Activated T-helper 2 cell treated with anti-CD3 and anti-CD28 coated beads, Interferon-gamma antibody, Interleukin-2, Interleukin-4, amounts not matched to agents 10 μg/mL and 5 μg/mL and 100 μg/mL, durations not matched to agents 14 hours and 24 hours and 36 hours (primary cell): ENCODE measurements at regions of chr6 and their contacts with region 1.

Region 1: DNA sequence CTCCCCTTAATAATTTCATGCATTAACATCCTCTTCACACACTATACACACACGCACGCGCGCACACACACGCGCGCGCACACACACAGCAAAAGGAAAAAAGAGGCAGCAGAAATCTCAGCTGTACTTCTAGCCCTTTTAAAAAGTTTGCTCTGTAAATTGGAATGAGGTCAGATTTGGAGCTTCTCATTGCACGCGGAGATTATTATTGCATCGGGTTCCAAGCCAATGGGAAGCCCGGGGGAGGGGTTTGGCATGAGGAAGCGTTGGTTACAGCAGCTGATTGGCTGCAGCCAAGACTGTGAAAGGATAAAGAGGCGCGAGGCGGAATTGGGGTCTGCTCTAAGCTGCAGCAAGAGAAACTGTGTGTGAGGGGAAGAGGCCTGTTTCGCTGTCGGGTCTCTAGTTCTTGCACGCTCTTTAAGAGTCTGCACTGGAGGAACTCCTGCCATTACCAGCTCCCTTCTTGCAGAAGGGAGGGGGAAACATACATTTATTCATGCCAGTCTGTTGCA is at the start of gene SOX4:
- DNase-seq: peak; percentile 77
- H3K4me3 Mint-ChIP-seq: no peak within 1 kb of the TSS
- H3K27ac Mint-ChIP-seq: peak within 1 kb of the TSS; percentile 91
- H3K4me1 Mint-ChIP-seq: peaks cover 22% of the 10 kb centered on the region
- H3K27me3 Mint-ChIP-seq: peaks cover 47% of the 10 kb centered on the region
- total RNA-seq, gene SOX4: 20.3 and 20.8 TPM in 2 replicates

Region 2: DNA sequence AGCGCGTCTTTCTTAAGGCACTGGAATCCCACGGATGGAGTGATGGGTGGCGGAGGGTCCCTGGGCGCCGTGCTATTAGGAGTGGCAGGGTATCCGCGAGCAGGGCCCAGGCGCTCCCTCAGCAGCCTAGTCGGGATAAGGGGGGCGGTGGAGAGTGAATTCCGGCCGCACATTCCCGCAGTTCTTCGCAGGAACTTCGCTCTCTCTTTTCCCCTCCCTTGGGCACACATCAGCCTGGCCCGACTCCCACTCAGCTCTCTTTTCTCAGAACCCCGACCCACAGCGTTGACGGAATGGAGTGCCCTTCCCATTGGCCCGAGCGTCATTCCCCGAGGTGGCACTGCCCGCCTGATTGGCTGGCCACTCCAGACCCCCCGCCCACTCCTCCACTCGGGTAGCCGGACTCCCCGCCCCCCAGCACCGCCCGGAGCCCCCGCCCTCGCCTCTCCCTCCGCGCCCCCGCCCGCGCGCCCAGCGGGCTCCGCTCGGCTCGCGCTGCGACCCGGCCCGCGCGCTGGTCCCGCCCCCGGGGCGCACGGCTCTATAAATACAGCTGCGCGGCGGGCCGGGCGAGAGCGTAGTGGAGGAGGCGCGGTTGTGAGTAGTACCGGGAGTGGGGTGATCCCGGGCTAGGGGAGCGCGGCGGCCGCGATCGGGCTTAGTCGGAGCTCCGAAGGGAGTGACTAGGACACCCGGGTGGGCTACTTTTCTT is 1756.5 kb before region 1 on chr6 and contains the start of gene ID4:
- intact Hi-C with region 1: loop called (anchors 10 kb)
- DNase-seq: no peak
- H3K4me3 Mint-ChIP-seq: no peak within 1 kb of the TSS
- H3K27ac Mint-ChIP-seq: no peak within 1 kb of the TSS
- H3K4me1 Mint-ChIP-seq: peaks cover 2% of the 10 kb centered on the region
- H3K27me3 Mint-ChIP-seq: peaks cover 49% of the 10 kb centered on the region
- total RNA-seq, gene ID4: not detected in 2 replicates

Region 3: GRCh38 chr6:20564269-20564668 is 1029.2 kb before region 1 on chr6:
- intact Hi-C with region 1: loop called (anchors 1 kb)
- DNase-seq: no peak
- H3K4me3 Mint-ChIP-seq: no peak overlapping the region
- H3K27ac Mint-ChIP-seq: no peak overlapping the region
- H3K4me1 Mint-ChIP-seq: peaks cover 22% of the 10 kb centered on the region
- H3K27me3 Mint-ChIP-seq: no peaks in the 10 kb centered on the region

Region 4: DNA sequence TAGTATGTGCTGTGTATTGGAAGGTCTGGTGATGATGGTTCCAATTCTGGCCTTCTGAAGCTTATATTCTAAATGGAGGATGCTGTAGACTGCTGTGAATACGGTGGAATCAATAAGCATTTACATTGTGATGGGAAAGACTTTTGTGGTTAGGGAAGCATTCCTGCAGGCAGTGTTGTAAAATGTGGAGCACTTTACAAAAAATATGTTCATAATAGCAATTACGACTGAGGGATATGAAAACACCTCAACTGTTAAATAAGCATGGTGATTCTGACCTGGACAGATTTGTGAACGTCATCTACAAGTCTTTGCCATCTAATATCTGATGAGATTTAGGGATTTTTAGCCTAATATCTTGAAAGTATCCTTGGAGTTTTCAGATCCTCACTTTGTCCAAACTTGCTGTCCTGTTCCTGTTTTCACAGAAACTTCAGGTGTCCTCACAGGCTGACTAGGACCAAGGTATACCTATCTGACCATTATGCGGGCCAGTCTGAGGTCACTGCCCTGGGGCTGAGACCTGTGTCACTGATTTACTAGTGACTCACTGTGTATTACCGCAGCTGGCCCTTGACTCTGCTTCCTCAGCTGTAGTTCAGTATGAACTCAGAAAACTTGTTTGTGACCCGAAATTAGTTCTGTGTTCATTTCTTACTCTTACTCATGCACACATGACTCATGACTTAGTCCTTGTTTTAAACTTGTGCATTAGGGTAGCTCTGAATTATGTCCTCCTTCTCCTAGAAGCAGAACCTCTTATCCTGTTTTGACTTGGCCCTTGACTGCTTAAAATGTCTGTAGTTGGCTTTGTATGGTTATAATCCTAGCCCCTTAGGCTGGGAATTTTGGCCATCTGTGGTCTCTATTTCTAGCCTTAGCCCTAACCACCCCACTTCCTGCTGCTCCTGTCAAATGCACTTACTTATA is 716.2 kb before region 1 on chr6:
- intact Hi-C with region 1: loop called (anchors 2 kb)
- DNase-seq: no peak
- H3K4me3 Mint-ChIP-seq: no peak overlapping the region
- H3K27ac Mint-ChIP-seq: peak overlapping the region; percentile 72
- H3K4me1 Mint-ChIP-seq: peaks cover 16% of the 10 kb centered on the region
- H3K27me3 Mint-ChIP-seq: no peaks in the 10 kb centered on the region

Region 5: DNA sequence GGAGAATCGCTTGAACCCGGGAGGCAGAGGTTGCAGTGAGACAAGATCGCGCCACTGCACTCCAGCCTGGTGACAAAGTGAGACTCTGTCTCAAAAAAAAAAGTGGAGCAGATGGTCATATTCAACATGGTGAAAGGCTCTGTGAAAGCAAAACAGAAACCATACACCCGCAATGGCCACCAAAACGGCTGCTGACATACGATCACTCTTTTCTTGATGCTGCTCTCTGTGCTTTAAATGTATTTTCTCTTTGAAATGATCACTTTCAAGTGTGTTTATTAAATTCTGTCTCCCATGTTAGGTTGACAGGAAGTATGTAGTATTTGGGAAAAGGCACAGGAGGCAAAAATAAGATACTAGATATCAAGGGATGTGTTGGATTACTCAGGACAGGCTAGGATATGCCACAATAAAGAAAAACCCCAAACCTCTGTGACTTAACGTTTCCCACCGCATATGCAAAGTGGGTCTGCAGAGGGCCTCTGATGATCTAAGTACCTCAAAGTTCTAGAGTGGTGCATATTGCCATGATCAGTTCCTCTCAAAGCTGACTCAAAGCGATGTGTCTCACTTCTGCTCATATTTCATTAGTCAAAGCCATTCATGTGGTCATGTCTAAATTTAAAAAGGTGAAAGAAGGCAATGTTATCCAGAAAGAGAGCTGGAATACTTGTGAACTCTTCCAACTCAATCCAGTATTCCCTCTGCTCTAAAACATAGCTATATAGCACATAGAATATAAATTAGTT is 155.1 kb before region 1 on chr6:
- intact Hi-C with region 1: loop called (anchors 2 kb)
- DNase-seq: peak; percentile 23
- H3K4me3 Mint-ChIP-seq: peak overlapping the region; percentile 74
- H3K27ac Mint-ChIP-seq: peak overlapping the region; percentile 96
- H3K4me1 Mint-ChIP-seq: peaks cover 22% of the 10 kb centered on the region
- H3K27me3 Mint-ChIP-seq: peaks cover 14% of the 10 kb centered on the region

Region 6: DNA sequence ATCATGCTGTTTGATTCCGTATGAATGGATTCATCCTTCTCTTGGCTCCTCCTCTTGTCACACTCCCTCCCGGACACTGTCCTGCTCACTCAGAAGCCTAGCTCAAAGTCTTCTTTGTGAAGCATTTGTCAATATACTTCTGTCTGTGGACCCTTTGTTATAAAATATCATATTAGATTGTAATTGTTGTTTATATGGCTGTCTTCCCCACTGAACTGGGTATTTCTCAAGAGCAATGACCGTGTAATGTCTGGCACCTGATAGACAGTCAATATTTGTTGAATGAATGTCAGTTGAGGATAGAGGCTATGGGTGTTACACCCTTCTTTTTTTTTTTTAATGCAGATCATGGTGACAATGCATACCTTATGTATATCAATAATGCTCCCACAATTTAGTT is 335.4 kb after region 1 on chr6:
- intact Hi-C with region 1: loop called (anchors 5 kb)
- DNase-seq: no peak
- H3K4me3 Mint-ChIP-seq: no peak overlapping the region
- H3K27ac Mint-ChIP-seq: no peak overlapping the region
- H3K4me1 Mint-ChIP-seq: peaks cover 34% of the 10 kb centered on the region
- H3K27me3 Mint-ChIP-seq: no peaks in the 10 kb centered on the region